ENCODE measurements at regions of chr1 and their contacts with region 1.

Region 1: GRCh38 chr1:110460253-110461220 is 9.6 kb downstream of the PROK1 start:
- DNase-seq: peak; percentile 68
- ATAC-seq: peak; percentile 99
- H3K4me3 Mint-ChIP-seq: no peak overlapping the region
- H3K27ac Mint-ChIP-seq: no peak overlapping the region
- H3K4me1 Mint-ChIP-seq: no peaks in the 10 kb centered on the region
- H3K27me3 Mint-ChIP-seq: no peaks in the 10 kb centered on the region
- CTCF ChIP-seq: peak; percentile 96

Region 2: GRCh38 chr1:110053557-110054428 is 406.7 kb before region 1 on chr1:
- CTCF ChIA-PET with region 1: interaction called, 6 read pairs
- POLR2A ChIA-PET with region 1: no interaction called
- intact Hi-C with region 1: loop called (anchors 1 kb)
- DNase-seq: peak; percentile 68
- ATAC-seq: peak; percentile 85
- H3K4me3 Mint-ChIP-seq: no peak overlapping the region
- H3K27ac Mint-ChIP-seq: no peak overlapping the region
- H3K4me1 Mint-ChIP-seq: no peaks in the 10 kb centered on the region
- H3K27me3 Mint-ChIP-seq: no peaks in the 10 kb centered on the region
- CTCF ChIP-seq: peak; percentile 50

Region 3: DNA sequence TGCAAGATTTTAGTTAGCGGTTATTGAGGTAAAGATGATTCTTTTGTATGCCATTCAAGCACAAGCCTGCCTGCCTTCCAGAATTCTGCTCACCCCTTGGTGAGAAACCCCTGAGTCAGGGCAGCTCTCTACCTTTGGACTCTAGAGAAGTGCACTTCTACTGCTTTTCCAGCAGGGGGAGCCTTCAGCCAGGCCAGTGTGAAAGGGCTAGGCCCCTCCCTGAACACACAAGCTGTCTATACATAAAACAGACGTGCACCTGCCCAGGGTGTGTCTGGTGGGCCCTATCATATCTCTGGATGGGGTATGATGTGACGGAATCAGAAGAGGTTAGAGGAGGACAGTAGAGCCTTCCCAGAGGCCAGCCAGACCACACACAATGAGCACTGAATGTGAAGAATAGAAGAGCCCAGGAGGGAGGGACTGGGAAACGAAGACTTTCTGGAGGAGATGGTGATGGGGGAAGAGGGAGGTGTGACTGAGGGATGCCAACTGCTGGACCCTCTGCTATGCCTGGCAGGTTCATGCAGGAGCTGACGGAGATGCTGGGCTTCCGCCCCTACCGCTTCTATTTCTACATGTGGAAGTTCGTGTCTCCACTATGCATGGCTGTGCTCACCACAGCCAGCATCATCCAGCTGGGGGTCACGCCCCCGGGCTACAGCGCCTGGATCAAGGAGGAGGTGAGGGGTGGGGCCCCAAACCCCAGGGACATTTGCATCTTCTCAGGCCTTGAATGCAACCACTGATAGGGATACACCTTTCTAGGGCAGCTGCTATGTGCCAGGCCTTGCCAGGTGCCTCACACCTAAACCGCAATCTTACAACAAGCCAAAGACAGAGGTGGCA is 263.4 kb before region 1 on chr1:
- CTCF ChIA-PET with region 1: interaction called, 106 read pairs
- POLR2A ChIA-PET with region 1: interaction called, 6 read pairs
- intact Hi-C with region 1: loop called (anchors 1 kb)
- DNase-seq: no peak
- ATAC-seq: peak; percentile 98
- H3K4me3 Mint-ChIP-seq: no peak overlapping the region
- H3K27ac Mint-ChIP-seq: no peak overlapping the region
- H3K4me1 Mint-ChIP-seq: peaks cover 3% of the 10 kb centered on the region
- H3K27me3 Mint-ChIP-seq: no peaks in the 10 kb centered on the region
- CTCF ChIP-seq: peak; percentile 36

Region 4: GRCh38 chr1:110312188-110313121 is 148.1 kb before region 1 on chr1:
- CTCF ChIA-PET with region 1: interaction called, 50 read pairs
- POLR2A ChIA-PET with region 1: no interaction called
- intact Hi-C with region 1: loop called (anchors 1 kb)
- DNase-seq: peak; percentile 52
- ATAC-seq: peak; percentile 99
- H3K4me3 Mint-ChIP-seq: no peak overlapping the region
- H3K27ac Mint-ChIP-seq: no peak overlapping the region
- H3K4me1 Mint-ChIP-seq: peaks cover 3% of the 10 kb centered on the region
- H3K27me3 Mint-ChIP-seq: no peaks in the 10 kb centered on the region
- CTCF ChIP-seq: peak; percentile 43

Region 5: GRCh38 chr1:110412576-110412975 is 48.0 kb before region 1 on chr1:
- CTCF ChIA-PET with region 1: interaction called, 53 read pairs
- POLR2A ChIA-PET with region 1: interaction called, 10 read pairs
- intact Hi-C with region 1: loop called (anchors 1 kb)
- DNase-seq: peak; percentile 56
- ATAC-seq: peak; percentile 66
- H3K4me3 Mint-ChIP-seq: peak overlapping the region; percentile 66
- H3K27ac Mint-ChIP-seq: peak overlapping the region; percentile 67
- H3K4me1 Mint-ChIP-seq: peaks cover 23% of the 10 kb centered on the region
- H3K27me3 Mint-ChIP-seq: no peaks in the 10 kb centered on the region
- CTCF ChIP-seq: no peak

Region 6: DNA sequence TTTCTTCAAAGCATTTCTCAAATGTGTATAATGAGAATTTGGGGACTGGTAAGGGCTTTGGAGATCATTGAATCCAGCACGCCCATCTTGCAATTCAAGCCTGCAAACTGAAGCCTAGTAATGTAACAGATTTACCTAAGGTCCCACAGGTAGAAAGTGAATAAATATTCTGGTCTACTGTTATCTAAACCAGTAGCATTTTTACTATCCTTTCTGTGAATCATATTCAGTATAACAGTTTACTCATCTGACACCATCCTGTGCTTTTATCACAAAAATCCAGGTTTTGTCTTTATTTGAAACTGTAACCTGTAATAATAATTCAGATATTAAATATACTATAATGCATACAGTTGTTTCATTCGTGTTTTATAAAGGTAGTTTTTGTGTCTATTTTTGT is 196.8 kb after region 1 on chr1:
- CTCF ChIA-PET with region 1: no interaction called
- POLR2A ChIA-PET with region 1: no interaction called
- intact Hi-C with region 1: no loop called
- DNase-seq: no peak
- ATAC-seq: no peak
- H3K4me3 Mint-ChIP-seq: no peak overlapping the region
- H3K27ac Mint-ChIP-seq: no peak overlapping the region
- H3K4me1 Mint-ChIP-seq: no peaks in the 10 kb centered on the region
- H3K27me3 Mint-ChIP-seq: no peaks in the 10 kb centered on the region
- CTCF ChIP-seq: no peak